K562 (cell line): ENCODE measurements at regions of chr1 and their contacts with region 1.

Region 1: DNA sequence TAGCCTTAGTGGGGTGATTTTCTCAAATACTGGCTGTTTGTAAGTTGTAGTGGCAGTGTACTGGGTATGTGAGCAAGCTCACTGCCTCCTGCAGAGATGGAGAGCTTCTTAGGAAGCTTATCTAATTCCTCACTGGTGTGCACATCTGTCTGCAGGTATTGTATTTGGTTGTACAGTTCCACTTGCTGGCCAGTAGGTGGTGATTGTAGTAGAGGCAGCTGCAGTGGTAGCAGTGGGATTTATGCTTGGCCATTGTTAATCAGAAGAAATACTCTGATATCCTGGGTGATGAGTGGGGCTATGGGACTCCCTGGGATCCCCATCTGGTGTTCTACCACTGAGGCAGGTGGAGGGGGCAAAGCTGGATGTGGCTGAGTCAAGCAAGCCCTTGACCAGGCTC is 276.1 kb upstream of the SPAG17 start:
- DNase-seq: no peak
- ATAC-seq: no peak
- H3K4me3 ChIP-seq: no peak overlapping the region
- H3K27ac ChIP-seq: no peak overlapping the region
- H3K4me1 ChIP-seq: no peaks in the 10 kb centered on the region
- H3K27me3 ChIP-seq: no peaks in the 10 kb centered on the region
- CTCF ChIP-seq: no peak
- EP300 ChIP-seq: no peak
- POLR2A ChIP-seq: no peak
- RAD21 ChIP-seq: no peak

Region 2: GRCh38 chr1:118485757-118486156 is 24.6 kb after region 1 on chr1:
- CTCF ChIA-PET with region 1: no interaction called
- POLR2A ChIA-PET with region 1: no interaction called
- in situ Hi-C with region 1: no loop called
- intact Hi-C with region 1: loop called (anchors 2 kb)
- DNase-seq: no peak
- ATAC-seq: no peak
- H3K4me3 ChIP-seq: no peak overlapping the region
- H3K27ac ChIP-seq: no peak overlapping the region
- H3K4me1 ChIP-seq: no peaks in the 10 kb centered on the region
- H3K27me3 ChIP-seq: no peaks in the 10 kb centered on the region
- CTCF ChIP-seq: no peak
- EP300 ChIP-seq: no peak
- POLR2A ChIP-seq: no peak
- RAD21 ChIP-seq: no peak

Region 3: DNA sequence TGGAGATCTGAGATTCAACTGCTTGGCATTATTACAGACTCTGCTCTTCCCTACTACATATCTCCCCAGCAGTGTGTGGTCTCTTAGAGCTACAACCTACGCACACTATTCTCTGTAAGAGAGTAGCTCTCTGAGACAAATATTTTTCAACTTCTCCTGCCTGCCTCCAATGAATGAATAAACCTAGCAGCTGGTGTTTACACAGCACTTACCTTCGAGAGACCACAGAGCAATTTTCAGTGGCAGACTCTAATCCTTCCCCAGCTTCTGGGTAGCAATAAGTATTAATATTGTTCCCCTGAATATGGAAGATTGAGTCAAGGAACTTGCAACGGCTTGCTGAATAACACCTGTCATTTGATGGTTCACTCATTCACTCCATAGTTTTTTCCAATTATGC is 74.7 kb after region 1 on chr1:
- CTCF ChIA-PET with region 1: no interaction called
- POLR2A ChIA-PET with region 1: no interaction called
- in situ Hi-C with region 1: no loop called
- intact Hi-C with region 1: no loop called
- DNase-seq: no peak
- ATAC-seq: no peak
- H3K4me3 ChIP-seq: no peak overlapping the region
- H3K27ac ChIP-seq: no peak overlapping the region
- H3K4me1 ChIP-seq: no peaks in the 10 kb centered on the region
- H3K27me3 ChIP-seq: no peaks in the 10 kb centered on the region
- CTCF ChIP-seq: no peak
- EP300 ChIP-seq: no peak
- POLR2A ChIP-seq: no peak
- RAD21 ChIP-seq: no peak